Mammary epithelial cell (primary cell): ENCODE measurements at regions of chr17 and their contacts with region 1.

Region 1: DNA sequence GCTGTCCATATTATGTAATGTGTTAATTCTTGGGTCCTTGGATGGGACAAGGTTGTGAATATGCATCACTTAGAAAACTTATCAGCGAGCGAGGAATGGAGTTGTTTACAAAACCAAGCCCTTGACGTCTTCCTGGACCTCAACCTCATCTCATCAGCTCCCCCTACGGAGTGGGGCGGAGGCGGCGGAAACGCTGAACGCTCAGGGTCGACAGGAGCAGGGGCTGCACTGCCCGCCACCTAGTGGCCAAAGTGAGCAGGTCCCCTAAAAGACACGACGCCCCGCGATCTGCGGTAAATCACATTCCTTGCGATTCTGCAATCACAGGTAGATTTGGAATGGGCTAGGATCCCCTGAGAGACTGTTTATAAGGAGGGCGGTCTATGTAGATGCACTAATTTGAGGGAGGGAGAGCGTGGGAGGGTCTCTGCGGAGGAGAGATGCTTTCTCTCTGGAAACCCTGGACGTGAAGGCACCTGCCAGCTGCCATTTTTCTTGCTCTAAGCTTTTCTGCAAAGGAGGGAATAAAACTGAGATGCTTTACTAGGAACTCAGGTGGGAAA is 5.4 kb upstream of the ICAM2 start:
- DNase-seq: peak; percentile 51
- H3K4me3 ChIP-seq: peak overlapping the region in 1 of 3 experiments; percentile 15
- H3K27ac ChIP-seq: no peak overlapping the region
- H3K4me1 ChIP-seq: no peaks in the 10 kb centered on the region
- H3K27me3 ChIP-seq: no peaks in the 10 kb centered on the region
- CTCF ChIP-seq: peak; percentile 91 to 93

Region 2: GRCh38 chr17:63760771-63761539 is 264.9 kb before region 1 on chr17:
- CTCF ChIA-PET with region 1: no interaction called
- dilution Hi-C with region 1: no loop called
- in situ Hi-C with region 1: no loop called
- intact Hi-C with region 1: no loop called
- DNase-seq: peak; percentile 68
- H3K4me3 ChIP-seq: no peak overlapping the region
- H3K27ac ChIP-seq: no peak overlapping the region
- H3K4me1 ChIP-seq: no peaks in the 10 kb centered on the region
- H3K27me3 ChIP-seq: no peaks in the 10 kb centered on the region
- CTCF ChIP-seq: no peak

Region 3: DNA sequence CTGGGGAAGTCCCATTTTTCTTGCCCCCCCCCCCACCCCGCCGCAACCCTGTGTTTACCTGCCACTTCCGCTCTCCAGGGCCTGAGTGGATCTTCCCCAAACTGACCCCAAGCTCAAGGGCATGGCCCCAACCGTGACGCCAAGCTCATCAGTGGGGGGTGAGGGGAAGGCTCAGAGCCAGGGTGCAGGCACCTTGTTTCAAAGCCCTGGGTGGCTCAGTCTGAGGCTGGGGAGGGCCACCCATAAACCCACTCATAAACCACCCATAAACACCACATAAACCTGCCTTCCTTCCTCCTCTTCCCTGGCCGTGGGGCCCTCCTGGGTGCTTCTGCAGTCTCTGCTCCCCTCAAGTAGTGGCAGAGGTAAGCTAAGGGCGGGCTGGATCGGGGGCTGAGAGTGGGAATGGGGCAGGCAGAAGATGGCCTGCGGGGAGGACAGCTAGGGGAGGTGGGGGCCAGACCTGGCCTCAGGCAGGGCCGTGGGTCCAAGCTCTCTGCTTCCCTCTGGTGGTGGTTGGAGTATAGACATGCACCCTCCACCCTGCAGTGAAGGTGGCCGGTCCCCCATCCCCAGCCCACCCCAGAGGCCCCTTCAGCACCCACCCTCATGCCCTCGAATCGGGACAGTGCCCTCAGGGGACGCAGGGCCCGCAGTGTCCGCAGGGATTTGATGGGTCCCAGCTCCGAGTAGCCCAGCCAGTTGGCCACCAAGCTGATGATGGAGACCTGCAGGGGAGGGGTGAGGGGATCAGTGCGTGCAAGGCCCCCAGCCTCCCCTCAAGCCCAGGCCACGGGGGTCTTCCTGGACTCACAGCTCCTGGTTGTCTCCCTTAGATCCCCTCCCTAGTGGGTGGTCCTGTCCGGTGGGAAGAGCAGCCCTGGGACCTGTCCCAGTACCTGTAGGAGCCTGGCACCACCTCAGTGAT is 79.1 kb before region 1 on chr17:
- CTCF ChIA-PET with region 1: no interaction called
- dilution Hi-C with region 1: no loop called
- in situ Hi-C with region 1: no loop called
- intact Hi-C with region 1: loop called (anchors 2 kb)
- DNase-seq: no peak
- H3K4me3 ChIP-seq: no peak overlapping the region
- H3K27ac ChIP-seq: no peak overlapping the region
- H3K4me1 ChIP-seq: no peaks in the 10 kb centered on the region
- H3K27me3 ChIP-seq: no peaks in the 10 kb centered on the region
- CTCF ChIP-seq: peak; percentile 45 to 73

Region 4: DNA sequence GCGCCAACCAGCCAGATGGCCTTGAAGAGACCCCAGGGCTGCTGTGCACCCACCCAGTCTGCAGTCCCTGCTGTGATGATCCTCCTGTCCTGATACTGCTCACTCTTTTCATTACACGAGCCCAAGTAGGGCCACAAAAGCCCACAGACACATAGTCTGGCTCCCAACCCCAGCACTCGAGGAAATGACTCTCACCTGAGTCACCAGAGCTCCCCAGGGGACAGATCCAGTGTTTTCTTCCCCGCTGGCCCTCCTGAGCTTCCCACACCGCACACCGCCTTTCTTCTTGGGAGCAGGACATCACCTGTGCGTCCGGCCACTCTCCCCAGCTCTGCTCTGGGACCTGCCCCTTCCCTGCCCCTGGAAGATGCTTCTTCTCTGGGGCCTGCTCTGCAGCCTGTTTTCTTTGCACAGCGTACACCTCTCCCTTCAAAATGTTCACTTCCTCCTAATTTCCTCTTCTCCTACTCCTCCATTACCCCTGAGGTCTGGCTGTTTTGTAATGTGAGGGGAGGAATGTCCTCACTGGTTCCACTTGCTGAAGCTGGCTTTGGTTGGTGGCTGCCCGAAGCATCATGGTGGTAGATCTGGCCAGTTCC is 51.1 kb before region 1 on chr17:
- CTCF ChIA-PET with region 1: no interaction called
- dilution Hi-C with region 1: no loop called
- in situ Hi-C with region 1: no loop called
- intact Hi-C with region 1: no loop called
- DNase-seq: peak; percentile 79
- H3K4me3 ChIP-seq: no peak overlapping the region
- H3K27ac ChIP-seq: no peak overlapping the region
- H3K4me1 ChIP-seq: peaks cover 23% of the 10 kb centered on the region
- H3K27me3 ChIP-seq: no peaks in the 10 kb centered on the region
- CTCF ChIP-seq: no peak

Region 5: DNA sequence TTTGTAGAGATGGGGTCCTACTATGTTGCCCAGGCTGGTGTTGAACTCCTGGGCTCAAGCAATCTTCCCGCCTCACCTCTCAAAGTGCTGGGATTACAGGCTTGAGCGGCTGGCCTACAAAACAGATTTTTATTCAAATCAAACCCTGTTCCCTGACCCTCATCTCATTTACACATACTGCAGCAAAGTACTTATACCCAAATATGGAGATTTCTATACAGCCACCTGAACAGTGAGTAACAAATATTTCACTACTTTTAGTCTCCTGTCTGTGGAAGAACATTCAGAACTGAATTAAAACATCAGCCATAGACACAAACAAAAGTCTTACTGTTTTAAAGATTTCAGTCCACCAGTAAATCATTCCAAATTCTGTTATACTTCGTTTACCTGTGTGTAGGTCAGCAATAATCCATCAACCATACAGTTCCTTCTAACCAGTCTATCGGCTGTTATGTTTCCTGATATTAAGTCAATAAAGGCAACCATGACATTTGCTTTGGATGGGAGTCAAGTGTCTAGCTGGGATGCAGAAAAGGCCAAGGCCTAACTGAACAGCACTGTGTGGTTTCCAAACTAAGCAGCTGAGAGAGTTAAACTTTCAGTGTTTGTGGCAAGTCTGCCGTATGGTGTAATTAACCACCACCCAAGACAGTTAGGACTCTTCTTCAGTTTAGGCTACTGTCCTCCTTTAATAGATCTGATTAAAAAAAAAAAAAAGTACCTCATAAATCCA is 81.9 kb after region 1 on chr17:
- CTCF ChIA-PET with region 1: no interaction called
- dilution Hi-C with region 1: no loop called
- in situ Hi-C with region 1: no loop called
- intact Hi-C with region 1: no loop called
- DNase-seq: no peak
- H3K4me3 ChIP-seq: no peak overlapping the region
- H3K27ac ChIP-seq: no peak overlapping the region
- H3K4me1 ChIP-seq: peaks cover 31% of the 10 kb centered on the region
- H3K27me3 ChIP-seq: no peaks in the 10 kb centered on the region
- CTCF ChIP-seq: no peak

Region 6: GRCh38 chr17:64124609-64125008 is 98.8 kb after region 1 on chr17:
- CTCF ChIA-PET with region 1: no interaction called
- dilution Hi-C with region 1: no loop called
- in situ Hi-C with region 1: no loop called
- intact Hi-C with region 1: no loop called
- DNase-seq: no peak
- H3K4me3 ChIP-seq: no peak overlapping the region
- H3K27ac ChIP-seq: no peak overlapping the region
- H3K4me1 ChIP-seq: peaks cover 12% of the 10 kb centered on the region
- H3K27me3 ChIP-seq: no peaks in the 10 kb centered on the region
- CTCF ChIP-seq: no peak